ENCODE measurements at regions of chr1 and their contacts with region 1.

Region 1: DNA sequence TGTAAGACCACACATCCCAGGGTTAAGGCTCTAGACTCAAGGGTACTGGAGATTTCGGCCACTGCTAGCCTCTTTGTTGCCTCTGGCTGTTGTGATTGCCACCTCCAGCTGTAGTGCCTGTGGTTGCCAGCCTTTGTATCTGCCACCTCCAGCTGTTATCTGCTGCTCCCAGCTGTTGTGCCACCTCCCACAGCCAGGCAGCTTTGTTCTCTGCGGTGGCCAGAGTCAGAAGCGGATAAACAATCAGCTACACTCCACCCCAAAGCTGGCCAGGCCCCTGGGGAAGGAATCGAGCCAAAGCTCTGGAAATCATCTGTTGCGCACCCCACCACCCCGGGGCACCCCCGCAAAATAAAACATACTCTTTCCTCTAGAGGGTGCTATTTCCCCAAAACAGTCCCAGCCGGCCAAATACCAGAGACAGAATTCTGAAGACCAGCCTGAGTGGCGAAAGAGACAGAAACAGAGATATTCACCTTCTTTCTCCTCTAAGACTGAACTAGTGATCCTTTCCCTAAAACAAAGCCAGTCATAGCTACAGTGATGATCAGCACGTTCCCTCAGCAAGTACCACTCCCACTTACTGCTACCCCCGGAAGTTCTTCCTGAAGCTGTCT is 14.8 kb upstream of the PIGM start:
- DNase-seq: peak; percentile 56
- ATAC-seq: peak; percentile 87
- H3K4me3 Mint-ChIP-seq: peak overlapping the region; percentile 62
- H3K27ac Mint-ChIP-seq: peak overlapping the region; percentile 42
- H3K4me1 Mint-ChIP-seq: peaks cover 12% of the 10 kb centered on the region
- H3K27me3 Mint-ChIP-seq: peaks cover 35% of the 10 kb centered on the region

Region 2: DNA sequence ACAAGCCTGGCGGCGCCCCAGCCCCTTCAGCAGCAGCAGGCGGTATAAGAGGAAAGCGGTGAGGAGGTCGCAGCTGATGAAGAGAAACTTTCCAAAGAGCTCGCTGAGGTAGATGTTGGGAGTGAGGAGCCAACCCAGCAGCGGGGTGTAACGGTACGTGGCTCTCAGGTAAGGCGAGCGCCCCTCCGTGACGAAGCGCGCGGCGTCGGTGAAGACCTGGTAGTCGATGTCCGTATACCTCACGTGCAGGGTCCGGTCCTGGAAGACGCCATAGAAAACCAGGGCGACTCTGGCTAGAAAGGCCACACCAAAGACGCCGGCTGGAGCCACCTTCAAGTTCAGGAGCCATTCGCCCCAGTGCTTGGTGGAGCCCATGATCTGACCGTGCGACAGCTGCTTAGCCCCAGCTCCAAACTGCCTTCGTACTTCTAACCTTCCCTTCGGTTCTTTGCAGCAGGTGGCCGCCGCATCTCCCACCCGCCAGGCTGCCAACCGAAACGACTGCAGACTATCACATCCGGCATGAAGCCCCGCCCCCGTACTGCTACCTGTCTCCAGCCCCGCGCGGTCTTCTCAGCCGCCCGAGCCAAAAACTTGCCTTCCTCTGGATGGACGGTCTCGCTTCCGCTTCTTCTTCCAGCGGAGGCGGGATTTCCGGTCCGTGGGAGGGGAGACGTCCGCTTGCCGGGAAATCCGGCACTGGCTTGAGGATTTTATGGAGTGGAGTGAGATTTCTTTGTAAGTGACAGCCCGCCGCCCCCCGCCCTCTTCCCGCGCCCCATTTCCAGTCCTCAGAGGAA is 15.0 kb before region 1 on chr1 and contains the start of gene PIGM:
- CTCF ChIA-PET with region 1: interaction called, 47 read pairs
- DNase-seq: peak; percentile 97
- ATAC-seq: peak; percentile 99
- H3K4me3 Mint-ChIP-seq: peak within 1 kb of the TSS; percentile 87
- H3K27ac Mint-ChIP-seq: peak within 1 kb of the TSS; percentile 85
- H3K4me1 Mint-ChIP-seq: peaks cover 27% of the 10 kb centered on the region
- H3K27me3 Mint-ChIP-seq: no peaks in the 10 kb centered on the region
- total RNA-seq, gene PIGM: 5.3 to 5.9 TPM

Region 3: DNA sequence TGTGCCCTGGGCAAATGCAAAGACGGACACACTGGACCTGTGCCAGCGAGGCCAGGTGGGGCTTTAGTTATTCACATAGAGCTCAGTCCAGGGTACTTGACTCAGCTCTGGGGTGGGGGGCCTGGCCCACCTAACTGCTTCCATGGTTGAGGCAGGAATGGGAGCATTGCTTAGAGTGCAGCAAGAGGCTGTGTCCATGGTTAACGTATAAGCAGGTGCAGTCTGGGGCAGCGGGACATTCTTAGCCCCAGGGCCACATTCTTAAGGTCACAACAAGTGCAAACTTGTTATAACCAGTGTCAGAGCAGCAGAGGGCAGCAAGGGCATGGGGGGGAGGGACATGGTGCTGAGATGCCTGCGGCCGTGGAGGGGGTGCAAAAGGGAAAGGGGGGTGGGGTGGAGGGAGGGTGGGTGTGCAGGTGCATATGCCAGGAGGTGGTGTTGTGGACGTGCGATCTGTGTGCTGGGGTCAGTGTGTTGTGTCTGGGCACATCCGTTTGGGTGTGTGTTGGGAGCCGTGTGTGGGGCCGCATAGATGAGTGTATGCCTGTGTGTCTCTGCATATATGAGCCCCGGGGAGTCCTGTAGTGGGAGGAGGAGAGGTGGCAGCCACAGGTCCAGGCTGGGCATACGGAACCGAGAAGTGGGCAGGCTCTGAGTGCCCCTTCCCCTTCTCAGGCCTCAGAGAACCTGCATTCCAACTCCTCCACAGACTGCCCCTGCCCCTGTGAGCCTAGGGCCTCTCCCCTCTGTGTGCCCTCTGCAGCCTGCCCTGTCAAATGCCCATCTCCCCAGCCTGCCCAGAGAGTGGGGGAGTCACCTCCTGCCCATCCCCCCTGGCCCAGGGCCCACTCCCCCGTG is 15.0 kb after region 1 on chr1:
- CTCF ChIA-PET with region 1: interaction called, 633 read pairs
- DNase-seq: no peak
- ATAC-seq: no peak
- H3K4me3 Mint-ChIP-seq: no peak overlapping the region
- H3K27ac Mint-ChIP-seq: no peak overlapping the region
- H3K4me1 Mint-ChIP-seq: no peaks in the 10 kb centered on the region
- H3K27me3 Mint-ChIP-seq: peaks cover 34% of the 10 kb centered on the region

Region 4: DNA sequence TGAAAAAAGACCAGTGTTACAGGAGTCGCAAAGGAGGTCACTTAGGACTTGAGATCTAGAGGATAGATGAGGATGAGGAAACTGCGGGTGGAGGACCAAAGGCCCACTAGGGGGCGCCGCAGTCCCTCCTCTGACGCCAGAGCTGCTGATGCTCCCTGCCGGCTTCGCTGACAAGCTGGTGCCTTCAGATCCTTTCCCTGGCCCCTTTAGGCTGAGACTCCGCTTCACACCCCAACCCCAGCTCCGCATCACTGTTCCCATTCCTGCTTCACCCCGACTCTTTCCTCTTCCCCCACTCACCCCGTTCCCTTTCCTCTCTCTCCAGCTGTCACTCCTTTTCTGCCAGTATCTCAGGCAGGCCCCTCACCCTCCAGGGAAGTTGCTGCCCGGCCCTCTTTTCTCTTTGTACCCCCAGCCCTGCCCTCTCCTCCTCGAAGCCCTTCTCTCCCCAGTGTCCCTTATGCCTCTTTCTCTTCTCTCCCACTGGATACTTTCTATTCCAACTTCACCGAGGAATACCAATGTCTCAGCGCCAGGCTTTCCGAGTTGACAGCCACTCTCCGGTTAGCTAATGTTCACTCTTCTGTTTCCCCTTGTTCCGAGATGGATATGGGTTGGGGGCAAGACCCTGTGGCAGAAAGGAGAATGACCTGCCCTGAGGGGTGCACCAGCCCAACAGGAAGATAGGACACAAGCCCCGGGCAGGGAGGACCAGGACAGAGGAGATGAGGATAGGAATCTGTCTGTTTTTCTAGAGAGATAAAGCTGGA is 39.3 kb after region 1 on chr1:
- CTCF ChIA-PET with region 1: interaction called, 633 read pairs
- DNase-seq: peak; percentile 83
- ATAC-seq: peak; percentile 61
- H3K4me3 Mint-ChIP-seq: no peak overlapping the region
- H3K27ac Mint-ChIP-seq: no peak overlapping the region
- H3K4me1 Mint-ChIP-seq: peaks cover 7% of the 10 kb centered on the region
- H3K27me3 Mint-ChIP-seq: peaks cover 24% of the 10 kb centered on the region